Esophagus squamous epithelium (tissue), 5 donors: ENCODE measurements at regions of chr9 and their contacts with region 1.

Region 1: DNA sequence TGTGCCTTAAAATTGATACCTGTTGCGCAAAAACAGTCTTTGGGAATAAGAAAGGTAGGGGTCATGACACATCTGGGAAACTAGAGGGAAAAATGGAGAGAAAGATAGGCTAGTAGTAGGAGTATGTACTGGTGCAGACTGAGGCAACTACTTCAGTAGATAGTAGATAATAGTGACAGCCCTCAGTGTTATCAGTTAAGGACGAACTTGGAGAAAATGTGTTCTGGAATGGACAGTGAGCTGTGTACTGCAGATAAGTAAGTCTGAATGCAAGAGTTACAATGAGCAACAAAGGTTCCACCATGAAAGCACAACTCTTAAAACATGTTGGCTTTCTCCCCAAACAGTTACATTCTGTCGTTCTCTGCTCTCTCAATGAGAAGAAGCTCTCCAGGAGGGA is 6.5 kb upstream of the INSL6 start:
- DNase-seq: no peak
- H3K4me3 ChIP-seq: no peak overlapping the region
- H3K27ac ChIP-seq: no peak overlapping the region
- H3K4me1 ChIP-seq: peaks cover 0 to 9% (median 0%) of the 10 kb centered on the region in 3 donors
- H3K27me3 ChIP-seq: peaks cover 0 to 3% (median 0%) of the 10 kb centered on the region in 4 donors
- CTCF ChIP-seq: no peak
- POLR2A ChIP-seq: no peak

Region 2: DNA sequence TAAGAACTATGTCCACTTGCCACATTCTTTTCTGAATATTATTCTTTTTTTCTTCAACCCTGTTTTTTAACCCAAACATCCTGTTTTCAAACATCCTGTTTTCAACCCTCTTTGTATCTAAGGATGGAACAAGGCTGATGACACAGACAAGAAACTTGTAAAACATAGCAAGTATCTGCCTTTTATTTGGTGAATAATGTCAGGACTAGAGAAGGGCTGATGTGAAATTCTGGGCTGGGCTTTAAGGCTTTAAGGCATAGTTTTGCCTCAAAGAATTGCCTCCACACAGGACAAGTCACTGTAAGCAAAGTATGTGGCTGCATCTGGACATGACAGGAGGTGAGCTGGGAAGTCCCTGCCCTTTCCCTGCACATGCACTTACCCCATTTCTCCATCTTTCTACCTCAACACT is 394.4 kb after region 1 on chr9:
- intact Hi-C with region 1: loop called (anchors 5 kb)
- DNase-seq: no peak
- H3K4me3 ChIP-seq: no peak overlapping the region
- H3K27ac ChIP-seq: peak overlapping the region; percentile 48 to 64 (median 55)
- H3K4me1 ChIP-seq: peaks cover 4 to 40% (median 10%) of the 10 kb centered on the region in 3 donors
- H3K27me3 ChIP-seq: no peaks in the 10 kb centered on the region
- CTCF ChIP-seq: no peak
- POLR2A ChIP-seq: no peak